Mammary epithelial cell (primary cell): ENCODE measurements at regions of chr5 and their contacts with region 1.

Region 1: DNA sequence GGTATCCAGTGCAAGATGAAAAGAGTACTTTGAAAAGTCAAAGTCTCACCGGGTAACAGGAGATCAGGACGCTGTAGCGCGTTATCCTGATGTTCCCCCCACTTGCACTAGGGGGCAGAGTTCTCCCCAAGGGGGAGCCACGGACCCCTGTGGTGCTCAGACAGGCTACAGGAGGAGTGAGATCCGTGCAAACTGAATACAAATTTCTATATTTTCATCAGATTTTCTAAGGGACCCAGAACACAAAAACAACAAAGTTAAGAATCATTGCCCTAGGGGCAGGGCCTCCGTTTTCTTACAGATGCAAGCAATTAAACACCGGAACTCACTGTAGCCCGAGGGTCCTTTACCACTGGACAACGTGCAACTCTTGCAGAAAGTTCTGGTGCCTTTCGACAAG is 2.0 kb downstream of the MYO10 start:
- DNase-seq: peak; percentile 68
- H3K4me3 ChIP-seq: peak overlapping the region; percentile 90 to 97 (median 96)
- H3K27ac ChIP-seq: peak overlapping the region; percentile 95
- H3K4me1 ChIP-seq: peaks cover 30% of the 10 kb centered on the region
- H3K27me3 ChIP-seq: no peaks in the 10 kb centered on the region
- CTCF ChIP-seq: peak; percentile 86 to 95

Region 2: DNA sequence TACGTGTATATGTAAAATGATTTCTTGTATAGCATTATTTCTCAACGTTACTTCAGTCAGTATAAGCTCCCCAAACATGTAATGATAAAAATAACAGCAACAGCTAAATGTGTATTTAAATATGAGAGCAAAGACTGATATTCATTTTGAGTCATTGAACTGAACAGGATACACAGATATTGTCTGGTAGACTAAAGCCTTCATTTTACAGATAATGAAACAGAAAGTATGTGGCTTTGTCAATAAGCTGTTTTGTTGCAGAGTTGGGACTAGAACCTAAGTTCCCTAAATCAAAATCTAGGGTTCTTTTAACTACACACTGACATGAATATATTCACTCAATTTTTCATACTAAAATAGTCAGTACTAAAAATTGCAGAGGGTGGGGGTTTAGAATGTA is 674.1 kb before region 1 on chr5:
- CTCF ChIA-PET with region 1: no interaction called
- dilution Hi-C with region 1: no loop called
- in situ Hi-C with region 1: no loop called
- intact Hi-C with region 1: no loop called
- DNase-seq: no peak
- H3K4me3 ChIP-seq: no peak overlapping the region
- H3K27ac ChIP-seq: no peak overlapping the region
- H3K4me1 ChIP-seq: no peaks in the 10 kb centered on the region
- H3K27me3 ChIP-seq: no peaks in the 10 kb centered on the region
- CTCF ChIP-seq: no peak

Region 3: GRCh38 chr5:16791036-16791705 is 143.0 kb before region 1 on chr5:
- CTCF ChIA-PET with region 1: no interaction called
- dilution Hi-C with region 1: no loop called
- in situ Hi-C with region 1: no loop called
- intact Hi-C with region 1: loop called (anchors 1 kb)
- DNase-seq: peak; percentile 27
- H3K4me3 ChIP-seq: no peak overlapping the region
- H3K27ac ChIP-seq: no peak overlapping the region
- H3K4me1 ChIP-seq: peaks cover 3% of the 10 kb centered on the region
- H3K27me3 ChIP-seq: no peaks in the 10 kb centered on the region
- CTCF ChIP-seq: peak; percentile 44 to 61

Region 4: GRCh38 chr5:16844948-16845347 is 89.2 kb before region 1 on chr5:
- CTCF ChIA-PET with region 1: no interaction called
- dilution Hi-C with region 1: no loop called
- in situ Hi-C with region 1: no loop called
- intact Hi-C with region 1: loop called (anchors 5 kb)
- DNase-seq: no peak
- H3K4me3 ChIP-seq: no peak overlapping the region
- H3K27ac ChIP-seq: no peak overlapping the region
- H3K4me1 ChIP-seq: peaks cover 7% of the 10 kb centered on the region
- H3K27me3 ChIP-seq: no peaks in the 10 kb centered on the region
- CTCF ChIP-seq: peak in 1 of 2 donors; percentile 19

Region 5: GRCh38 chr5:16913187-16914107 is 20.7 kb before region 1 on chr5:
- CTCF ChIA-PET with region 1: no interaction called
- dilution Hi-C with region 1: no loop called
- in situ Hi-C with region 1: no loop called
- intact Hi-C with region 1: loop called (anchors 1 kb)
- DNase-seq: peak; percentile 66
- H3K4me3 ChIP-seq: peak overlapping the region; percentile 9 to 19 (median 15)
- H3K27ac ChIP-seq: peak overlapping the region; percentile 87
- H3K4me1 ChIP-seq: peaks cover 61% of the 10 kb centered on the region
- H3K27me3 ChIP-seq: no peaks in the 10 kb centered on the region
- CTCF ChIP-seq: no peak

Region 6: DNA sequence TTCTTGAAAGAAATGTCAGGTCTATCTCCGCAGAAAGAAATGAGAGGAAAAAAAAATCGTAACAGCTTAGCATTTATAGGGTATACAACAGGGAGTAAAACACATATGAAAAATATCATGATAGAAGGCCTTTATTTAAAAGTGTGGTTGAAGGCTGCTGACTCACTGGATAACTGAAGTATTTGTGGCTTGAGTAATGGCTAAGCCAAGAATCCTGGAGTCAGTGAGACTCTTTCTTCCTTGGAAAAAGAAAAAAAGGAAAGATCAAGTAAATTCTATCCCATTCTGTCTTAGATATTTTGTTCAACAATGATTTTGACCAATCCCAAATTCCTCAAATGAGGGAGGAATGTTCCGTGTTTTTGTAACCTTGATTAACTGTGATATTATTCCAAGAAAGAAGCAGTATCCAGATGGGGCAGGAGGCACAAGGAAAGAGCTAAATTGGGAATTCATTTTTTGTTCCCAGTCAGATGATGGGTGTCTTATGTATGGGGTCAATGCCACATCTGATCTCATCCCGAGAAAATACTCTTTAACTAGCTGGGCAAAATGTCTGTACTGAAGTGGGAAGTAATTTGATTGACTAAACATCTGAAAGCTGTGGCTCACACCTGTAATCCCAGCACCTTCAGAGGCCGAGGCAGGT is 66.3 kb after region 1 on chr5:
- CTCF ChIA-PET with region 1: no interaction called
- dilution Hi-C with region 1: no loop called
- in situ Hi-C with region 1: no loop called
- intact Hi-C with region 1: loop called (anchors 5 kb)
- DNase-seq: peak; percentile 84
- H3K4me3 ChIP-seq: no peak overlapping the region
- H3K27ac ChIP-seq: peak overlapping the region; percentile 69
- H3K4me1 ChIP-seq: peaks cover 11% of the 10 kb centered on the region
- H3K27me3 ChIP-seq: no peaks in the 10 kb centered on the region
- CTCF ChIP-seq: no peak

Region 7: GRCh38 chr5:17132444-17133083 is 198.4 kb after region 1 on chr5:
- CTCF ChIA-PET with region 1: interaction called, 4 read pairs
- dilution Hi-C with region 1: no loop called
- in situ Hi-C with region 1: loop called in 1 of 2 experiments (anchors 10 kb)
- intact Hi-C with region 1: loop called (anchors 1 kb)
- DNase-seq: no peak
- H3K4me3 ChIP-seq: no peak overlapping the region
- H3K27ac ChIP-seq: no peak overlapping the region
- H3K4me1 ChIP-seq: peaks cover 9% of the 10 kb centered on the region
- H3K27me3 ChIP-seq: no peaks in the 10 kb centered on the region
- CTCF ChIP-seq: peak; percentile 61 to 64

Region 8: GRCh38 chr5:17143335-17143734 is 209.2 kb after region 1 on chr5:
- CTCF ChIA-PET with region 1: interaction called, 14 read pairs
- dilution Hi-C with region 1: no loop called
- in situ Hi-C with region 1: loop called in 1 of 2 experiments (anchors 10 kb)
- intact Hi-C with region 1: no loop called
- DNase-seq: no peak
- H3K4me3 ChIP-seq: no peak overlapping the region
- H3K27ac ChIP-seq: no peak overlapping the region
- H3K4me1 ChIP-seq: peaks cover 6% of the 10 kb centered on the region
- H3K27me3 ChIP-seq: no peaks in the 10 kb centered on the region
- CTCF ChIP-seq: no peak